ENCODE measurements at regions of chr21 and their contacts with region 1.

Region 1: DNA sequence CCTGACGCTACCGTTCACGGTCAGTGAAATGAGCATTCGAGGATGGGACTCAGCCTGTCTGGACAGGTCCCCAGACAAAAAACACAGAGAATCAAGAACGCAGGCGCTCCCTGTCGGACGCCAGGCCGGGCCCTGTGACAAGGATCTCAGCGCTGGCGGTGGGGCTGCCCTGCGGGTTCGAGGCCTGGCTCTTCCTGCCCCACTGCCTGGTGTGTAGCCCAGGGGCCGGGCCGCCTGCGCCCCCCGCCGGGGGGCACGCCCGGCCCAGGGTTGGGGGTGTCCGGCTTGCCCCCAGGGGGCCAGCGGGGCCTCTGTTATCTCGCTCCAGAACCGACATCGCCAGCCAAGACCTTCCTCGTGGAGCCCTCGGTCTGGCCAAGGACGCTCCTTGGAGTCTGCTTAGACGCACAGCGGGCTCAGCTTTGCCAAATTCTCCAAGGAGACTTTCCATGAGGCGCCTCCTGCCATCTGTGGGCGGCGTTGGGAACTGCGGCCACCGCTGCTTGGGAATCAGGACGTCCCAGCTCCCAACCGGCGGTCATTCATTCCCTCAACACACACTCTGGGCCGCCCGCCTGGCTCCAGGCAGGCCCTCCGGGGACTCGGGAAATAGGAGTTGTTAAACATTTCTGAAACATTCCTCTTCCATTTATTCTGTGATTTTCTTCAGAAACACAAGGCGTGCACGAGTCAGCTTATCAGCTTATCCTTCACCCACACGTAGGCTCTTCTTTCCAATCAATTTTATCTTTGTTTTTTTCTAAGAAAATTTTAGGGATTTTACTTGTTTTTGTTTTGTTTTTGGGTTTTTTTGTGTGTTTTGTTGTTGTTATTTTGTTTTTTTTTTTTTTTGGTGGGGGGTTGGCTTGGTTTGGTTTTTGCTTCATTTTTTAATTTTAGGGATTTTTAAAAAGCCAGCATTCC is 11.4 kb upstream of the RIPK4 start:
- DNase-seq: peak; percentile 91
- ATAC-seq: peak; percentile 96

Region 2: GRCh38 chr21:41580758-41581554 is 197.3 kb before region 1 on chr21:
- intact Hi-C with region 1: no loop called
- DNase-seq: no peak
- ATAC-seq: no peak

Region 3: GRCh38 chr21:41612674-41613532 is 165.3 kb before region 1 on chr21:
- intact Hi-C with region 1: loop called (anchors 2 kb)
- DNase-seq: peak; percentile 84
- ATAC-seq: peak; percentile 93

Region 4: DNA sequence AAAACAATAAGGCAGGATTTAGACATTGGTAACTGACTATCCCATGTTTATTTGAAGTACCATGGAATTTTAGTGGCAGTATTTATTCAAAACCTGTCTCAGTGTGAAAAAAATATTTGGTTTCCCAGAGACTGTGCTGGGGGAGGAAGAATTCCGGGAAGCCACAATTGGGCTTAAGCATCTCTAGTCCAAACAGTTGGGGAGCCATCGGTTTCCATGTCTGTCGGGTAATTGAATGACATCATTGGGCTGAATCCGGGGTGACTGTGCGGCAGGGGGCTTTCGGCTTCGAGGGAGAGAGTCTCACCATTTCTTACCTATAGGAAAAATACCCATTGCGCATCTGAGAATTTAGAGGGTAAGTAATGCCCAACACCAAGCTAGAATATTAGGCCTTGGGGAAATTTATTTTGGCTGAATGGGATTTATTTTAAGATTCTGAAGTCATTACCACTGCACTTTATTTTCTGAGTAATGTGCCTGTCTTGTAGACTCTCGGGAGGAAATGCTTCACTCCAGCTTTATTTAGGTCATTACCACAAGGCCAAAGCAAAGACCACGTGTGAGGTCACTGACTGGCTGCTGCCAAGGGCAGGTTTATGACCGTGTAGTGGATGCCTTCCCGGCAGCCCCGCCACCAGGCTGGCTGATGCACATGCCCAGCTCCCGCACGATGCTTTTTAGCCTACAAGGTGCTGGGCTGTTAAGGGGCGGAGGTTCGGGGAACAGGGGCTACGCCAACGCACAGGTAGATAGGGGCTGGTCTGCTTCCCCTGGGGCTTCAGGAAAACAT is 269.8 kb after region 1 on chr21:
- intact Hi-C with region 1: no loop called
- DNase-seq: peak; percentile 47
- ATAC-seq: peak; percentile 64

Measured in Right ventricle myocardium superior (tissue), 1 donor.